HepG2 (cell line): ENCODE measurements at regions of chr9 and their contacts with region 1.

Region 1: DNA sequence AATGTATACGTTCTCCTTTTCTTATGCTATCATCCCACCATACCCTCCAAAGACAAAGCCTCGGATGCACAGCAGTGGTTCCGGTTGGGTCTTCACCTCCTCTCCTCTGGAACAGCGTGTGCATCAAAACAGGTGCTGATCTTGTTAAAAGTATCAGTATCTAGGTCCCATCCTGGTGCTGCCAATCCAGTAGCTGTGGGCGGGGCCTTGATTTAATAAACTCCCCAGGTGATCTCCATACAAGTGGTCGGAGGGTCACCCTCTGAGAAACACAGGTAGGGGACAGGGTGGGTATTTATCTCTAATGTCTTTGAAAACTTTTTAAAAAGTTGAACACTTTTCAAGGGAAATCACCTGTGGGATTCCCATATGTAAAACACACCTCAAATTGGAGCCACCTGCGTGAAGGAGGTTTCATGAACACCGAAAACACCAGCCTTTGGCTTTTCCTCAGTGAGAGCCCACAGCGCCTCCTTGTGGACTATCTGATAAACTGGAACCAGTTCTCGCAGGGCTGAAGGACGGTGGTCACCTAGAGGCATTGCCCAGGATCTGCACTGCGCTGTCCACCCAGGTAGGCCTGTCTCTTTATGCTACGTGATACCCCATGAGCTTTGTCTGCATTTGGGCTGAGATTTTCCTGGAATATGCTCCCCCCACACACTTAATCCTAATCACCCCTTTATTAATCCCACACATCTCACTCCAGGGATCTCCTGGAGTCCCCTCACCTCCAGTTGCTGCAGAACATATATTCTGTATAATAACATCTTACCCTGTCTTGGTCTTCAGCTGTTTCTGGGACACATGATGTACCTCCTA is 80.5 kb upstream of the EPB41L4B start:
- DNase-seq: peak; percentile 65
- ATAC-seq: peak; percentile 100
- H3K4me3 ChIP-seq: no peak overlapping the region
- H3K27ac ChIP-seq: no peak overlapping the region
- H3K4me1 ChIP-seq: no peaks in the 10 kb centered on the region
- H3K27me3 ChIP-seq: no peaks in the 10 kb centered on the region
- CTCF ChIP-seq: peak; percentile 86
- EP300 ChIP-seq: no peak
- POLR2A ChIP-seq: no peak
- RAD21 ChIP-seq: peak; percentile 70

Region 2: GRCh38 chr9:109244157-109245132 is 156.9 kb before region 1 on chr9:
- CTCF ChIA-PET with region 1: no interaction called
- POLR2A ChIA-PET with region 1: no interaction called
- in situ Hi-C with region 1: no loop called
- intact Hi-C with region 1: loop called (anchors 2 kb)
- DNase-seq: peak; percentile 63
- ATAC-seq: peak; percentile 82
- H3K4me3 ChIP-seq: no peak overlapping the region
- H3K27ac ChIP-seq: no peak overlapping the region
- H3K4me1 ChIP-seq: peaks cover 16% of the 10 kb centered on the region
- H3K27me3 ChIP-seq: no peaks in the 10 kb centered on the region
- CTCF ChIP-seq: peak; percentile 90
- EP300 ChIP-seq: no peak
- POLR2A ChIP-seq: no peak
- RAD21 ChIP-seq: peak; percentile 73

Region 3: GRCh38 chr9:109507421-109507838 is 106.1 kb after region 1 on chr9:
- CTCF ChIA-PET with region 1: no interaction called
- POLR2A ChIA-PET with region 1: no interaction called
- in situ Hi-C with region 1: no loop called
- intact Hi-C with region 1: no loop called
- DNase-seq: peak; percentile 92
- ATAC-seq: peak; percentile 89
- H3K4me3 ChIP-seq: peak overlapping the region; percentile 29 to 51 (median 32)
- H3K27ac ChIP-seq: no peak overlapping the region
- H3K4me1 ChIP-seq: peaks cover 51% of the 10 kb centered on the region
- H3K27me3 ChIP-seq: no peaks in the 10 kb centered on the region; a peak in 2 of 5 replicates
- CTCF ChIP-seq: peak; percentile 21; the same call in 1 of the 2 replicates
- EP300 ChIP-seq: peak; percentile 70 to 88; a peak in 3 of 4 replicates
- POLR2A ChIP-seq: no peak
- RAD21 ChIP-seq: no peak